Naive thymus-derived CD8-positive, alpha-beta T cell (primary cell): ENCODE measurements at regions of chr7 and their contacts with region 1.

Region 1: GRCh38 chr7:816300-816750 is 16.0 kb upstream of the SUN1 start:
- DNase-seq: peak; percentile 91 to 98 (median 96)
- ATAC-seq: peak; percentile 92 to 95
- H3K4me3 Mint-ChIP-seq: peak overlapping the region; percentile 22 to 88 (median 71)
- H3K27ac Mint-ChIP-seq: peak overlapping the region in 3 of 10 donors; percentile 7 to 84 (median 51)
- H3K4me1 Mint-ChIP-seq: peaks cover 39 to 67% (median 62%) of the 10 kb centered on the region in 4 donors
- H3K27me3 Mint-ChIP-seq: peaks cover 0 to 5% (median 0%) of the 10 kb centered on the region in 5 donors

Region 2: DNA sequence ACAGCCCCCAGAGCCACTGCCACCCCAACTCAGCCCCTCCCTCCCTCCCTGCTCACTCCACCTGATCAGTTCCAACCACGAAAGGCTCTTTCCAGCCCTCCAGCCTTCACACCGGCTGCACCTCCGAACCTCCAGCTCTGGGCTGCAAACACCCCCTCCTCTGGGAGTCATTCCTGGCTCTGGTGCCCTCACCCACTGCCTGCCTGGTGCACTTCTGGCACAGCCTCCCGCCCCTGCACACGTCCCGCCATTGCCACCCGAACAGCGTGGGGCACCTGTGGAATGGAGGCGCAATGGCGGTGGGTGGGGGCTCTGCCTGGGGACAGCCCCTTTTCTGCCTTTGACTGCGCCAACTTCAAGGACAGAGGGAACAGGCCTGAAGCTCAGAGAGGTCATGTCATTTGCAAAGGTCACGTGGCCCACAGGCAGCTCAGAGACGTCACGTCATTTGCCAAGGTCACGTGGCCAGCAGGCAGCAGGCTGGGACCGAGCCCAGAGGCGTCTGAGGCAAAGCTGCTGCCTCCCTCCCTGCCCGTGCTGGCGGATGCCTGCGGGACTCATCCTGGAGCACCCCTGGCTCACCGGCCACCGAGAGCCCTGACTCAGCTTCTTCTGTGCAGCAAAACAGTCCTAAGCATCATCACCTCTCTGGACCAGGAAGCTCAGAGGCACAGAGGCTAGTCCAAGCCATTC is 165.8 kb before region 1 on chr7:
- POLR2A ChIA-PET with region 1: no interaction called
- DNase-seq: peak in 1 of 10 donors; percentile 53
- ATAC-seq: no peak
- H3K4me3 Mint-ChIP-seq: no peak overlapping the region
- H3K27ac Mint-ChIP-seq: peak overlapping the region in 1 of 10 donors; percentile 40
- H3K4me1 Mint-ChIP-seq: peaks cover 0 to 5% (median 2%) of the 10 kb centered on the region in 4 donors
- H3K27me3 Mint-ChIP-seq: no peaks in the 10 kb centered on the region

Region 3: GRCh38 chr7:786472-787255 is 29.7 kb before region 1 on chr7:
- POLR2A ChIA-PET with region 1: no interaction called
- DNase-seq: peak; percentile 46 to 84 (median 66)
- ATAC-seq: peak; percentile 92 to 95
- H3K4me3 Mint-ChIP-seq: no peak overlapping the region
- H3K27ac Mint-ChIP-seq: peak overlapping the region in 3 of 10 donors; percentile 16 to 78 (median 18)
- H3K4me1 Mint-ChIP-seq: peaks cover 0 to 2% (median 0%) of the 10 kb centered on the region in 4 donors
- H3K27me3 Mint-ChIP-seq: no peaks in the 10 kb centered on the region

Region 4: GRCh38 chr7:831596-832166 is 15.4 kb after region 1 on chr7:
- POLR2A ChIA-PET with region 1: interaction called, 21 read pairs
- DNase-seq: peak in 1 of 10 donors; percentile 13
- ATAC-seq: peak in 1 of 2 donors; percentile 35
- H3K4me3 Mint-ChIP-seq: peak overlapping the region; percentile 60 to 91 (median 87)
- H3K27ac Mint-ChIP-seq: peak overlapping the region; percentile 76 to 100 (median 95)
- H3K4me1 Mint-ChIP-seq: peaks cover 23 to 61% (median 54%) of the 10 kb centered on the region in 4 donors
- H3K27me3 Mint-ChIP-seq: no peaks in the 10 kb centered on the region

Region 5: GRCh38 chr7:876167-876967 is 60.0 kb after region 1 on chr7 and contains the start of gene GET4:
- POLR2A ChIA-PET with region 1: interaction called, 14 read pairs
- DNase-seq: peak; percentile 95 to 99 (median 98)
- ATAC-seq: peak; percentile 80 to 81
- H3K4me3 Mint-ChIP-seq: peak within 1 kb of the TSS; percentile 83 to 95 (median 89)
- H3K27ac Mint-ChIP-seq: peak within 1 kb of the TSS; percentile 71 to 97 (median 90)
- H3K4me1 Mint-ChIP-seq: peaks cover 7 to 44% (median 33%) of the 10 kb centered on the region in 4 donors
- H3K27me3 Mint-ChIP-seq: no peaks in the 10 kb centered on the region
- polyA plus RNA-seq, gene GET4: 23.0 to 34.6 (median 23.6) TPM